ENCODE measurements at regions of chr4 and their contacts with region 1.

Region 1: DNA sequence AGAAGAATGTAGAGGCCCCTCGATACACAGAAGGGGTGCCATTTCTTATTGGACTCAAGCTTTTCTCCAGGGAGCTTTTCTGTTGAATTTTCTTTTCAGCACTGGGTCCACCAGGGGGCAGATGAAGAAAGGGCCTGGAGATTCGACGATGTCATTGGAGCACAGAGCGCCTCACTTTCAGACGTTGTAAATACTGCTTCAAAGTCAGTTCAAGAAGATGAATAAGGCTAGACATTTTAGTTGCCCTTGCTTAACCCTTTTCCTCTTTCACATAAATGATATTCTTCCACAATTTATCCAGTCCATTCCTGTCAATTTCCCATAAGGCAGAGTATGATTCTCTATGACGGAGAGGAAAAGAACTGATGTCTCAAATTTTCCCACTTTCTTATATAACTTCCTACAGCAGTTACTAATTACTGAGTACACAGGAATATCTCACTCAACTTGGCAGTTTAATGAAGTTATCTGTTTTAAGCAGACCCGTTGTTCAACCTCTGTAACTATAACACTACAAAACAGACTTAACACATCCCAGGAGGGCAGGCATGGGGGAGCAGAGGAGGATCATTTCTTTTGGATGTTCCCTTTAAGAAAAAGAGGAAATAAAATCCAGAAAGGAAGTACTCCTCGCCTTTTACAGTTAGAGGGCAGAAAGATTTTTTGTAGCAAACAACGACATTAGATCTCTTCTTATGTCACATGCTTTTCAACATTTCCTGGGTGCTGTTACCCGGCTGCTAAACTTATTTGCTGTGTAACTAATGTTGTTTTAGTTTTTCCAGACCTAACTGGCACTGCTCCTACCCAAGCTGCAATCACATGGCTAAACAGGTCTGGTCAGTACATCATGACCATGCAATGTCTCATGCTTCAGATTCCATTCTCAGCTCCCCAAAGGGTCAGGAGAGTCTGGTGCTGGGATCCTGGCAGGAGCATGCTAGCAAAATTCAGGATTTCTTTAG is 12.2 kb upstream of the CENPU start:
- DNase-seq: peak; percentile 64 to 88
- H3K4me3 ChIP-seq: peak overlapping the region; percentile 36; the same call in 1 of the 2 replicates
- H3K27ac ChIP-seq: peak overlapping the region; percentile 98
- H3K4me1 ChIP-seq: peaks cover 42% of the 10 kb centered on the region
- H3K27me3 ChIP-seq: no peaks in the 10 kb centered on the region
- CTCF ChIP-seq: peak; percentile 76

Region 2: DNA sequence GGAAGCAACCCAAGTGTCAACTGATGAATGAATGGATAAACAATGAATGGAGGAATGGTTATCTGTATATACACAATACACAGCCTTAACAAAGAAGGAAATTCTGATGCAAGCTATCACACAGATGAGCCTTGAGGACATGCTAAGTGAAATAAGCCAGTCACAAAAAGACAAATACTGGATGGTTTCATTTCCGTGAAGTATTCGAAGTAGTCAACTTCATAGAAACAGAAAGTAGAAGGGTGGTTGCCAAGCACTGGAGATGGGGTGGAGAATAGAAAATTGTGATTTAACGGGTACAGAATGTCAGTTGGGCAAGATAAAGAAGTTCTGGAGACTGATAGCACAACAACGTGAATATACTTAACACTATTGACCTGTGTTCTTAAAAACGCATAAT is 40.4 kb before region 1 on chr4:
- CTCF ChIA-PET with region 1: no interaction called
- POLR2A ChIA-PET with region 1: no interaction called
- intact Hi-C with region 1: no loop called
- DNase-seq: no peak
- H3K4me3 ChIP-seq: no peak overlapping the region
- H3K27ac ChIP-seq: no peak overlapping the region
- H3K4me1 ChIP-seq: no peaks in the 10 kb centered on the region
- H3K27me3 ChIP-seq: no peaks in the 10 kb centered on the region
- CTCF ChIP-seq: no peak

Region 3: GRCh38 chr4:184815046-184815877 is 69.1 kb after region 1 on chr4:
- CTCF ChIA-PET with region 1: interaction called, 5 read pairs
- POLR2A ChIA-PET with region 1: no interaction called
- intact Hi-C with region 1: loop called (anchors 1 kb)
- DNase-seq: peak; percentile 87
- H3K4me3 ChIP-seq: peak overlapping the region; percentile 44
- H3K27ac ChIP-seq: peak overlapping the region; percentile 85
- H3K4me1 ChIP-seq: peaks cover 57% of the 10 kb centered on the region
- H3K27me3 ChIP-seq: no peaks in the 10 kb centered on the region
- CTCF ChIP-seq: no peak

Region 4: GRCh38 chr4:184937745-184938144 is 191.6 kb after region 1 on chr4:
- CTCF ChIA-PET with region 1: no interaction called
- POLR2A ChIA-PET with region 1: no interaction called
- intact Hi-C with region 1: loop called (anchors 1 kb)
- DNase-seq: no peak
- H3K4me3 ChIP-seq: no peak overlapping the region
- H3K27ac ChIP-seq: no peak overlapping the region
- H3K4me1 ChIP-seq: peaks cover 31% of the 10 kb centered on the region
- H3K27me3 ChIP-seq: no peaks in the 10 kb centered on the region
- CTCF ChIP-seq: no peak

Region 5: GRCh38 chr4:185005216-185005819 is 259.2 kb after region 1 on chr4:
- CTCF ChIA-PET with region 1: no interaction called
- POLR2A ChIA-PET with region 1: no interaction called
- intact Hi-C with region 1: loop called (anchors 1 kb)
- DNase-seq: peak in 1 of 2 experiments; percentile 73
- H3K4me3 ChIP-seq: no peak overlapping the region
- H3K27ac ChIP-seq: no peak overlapping the region
- H3K4me1 ChIP-seq: no peaks in the 10 kb centered on the region
- H3K27me3 ChIP-seq: no peaks in the 10 kb centered on the region
- CTCF ChIP-seq: peak; percentile 83

Region 6: GRCh38 chr4:185096032-185096653 is 350.0 kb after region 1 on chr4:
- CTCF ChIA-PET with region 1: interaction called, 3 read pairs
- POLR2A ChIA-PET with region 1: no interaction called
- intact Hi-C with region 1: loop called (anchors 1 kb)
- DNase-seq: peak in 1 of 2 experiments; percentile 20
- H3K4me3 ChIP-seq: no peak overlapping the region
- H3K27ac ChIP-seq: no peak overlapping the region
- H3K4me1 ChIP-seq: no peaks in the 10 kb centered on the region
- H3K27me3 ChIP-seq: no peaks in the 10 kb centered on the region
- CTCF ChIP-seq: peak; percentile 71

Region 7: GRCh38 chr4:185445209-185445608 is 699.1 kb after region 1 on chr4:
- CTCF ChIA-PET with region 1: no interaction called
- POLR2A ChIA-PET with region 1: no interaction called
- intact Hi-C with region 1: no loop called
- DNase-seq: no peak
- H3K4me3 ChIP-seq: no peak overlapping the region
- H3K27ac ChIP-seq: no peak overlapping the region
- H3K4me1 ChIP-seq: no peaks in the 10 kb centered on the region
- H3K27me3 ChIP-seq: no peaks in the 10 kb centered on the region
- CTCF ChIP-seq: no peak